GM10248 (cell line): ENCODE measurements at regions of chr3 and their contacts with region 1.

Region 1: DNA sequence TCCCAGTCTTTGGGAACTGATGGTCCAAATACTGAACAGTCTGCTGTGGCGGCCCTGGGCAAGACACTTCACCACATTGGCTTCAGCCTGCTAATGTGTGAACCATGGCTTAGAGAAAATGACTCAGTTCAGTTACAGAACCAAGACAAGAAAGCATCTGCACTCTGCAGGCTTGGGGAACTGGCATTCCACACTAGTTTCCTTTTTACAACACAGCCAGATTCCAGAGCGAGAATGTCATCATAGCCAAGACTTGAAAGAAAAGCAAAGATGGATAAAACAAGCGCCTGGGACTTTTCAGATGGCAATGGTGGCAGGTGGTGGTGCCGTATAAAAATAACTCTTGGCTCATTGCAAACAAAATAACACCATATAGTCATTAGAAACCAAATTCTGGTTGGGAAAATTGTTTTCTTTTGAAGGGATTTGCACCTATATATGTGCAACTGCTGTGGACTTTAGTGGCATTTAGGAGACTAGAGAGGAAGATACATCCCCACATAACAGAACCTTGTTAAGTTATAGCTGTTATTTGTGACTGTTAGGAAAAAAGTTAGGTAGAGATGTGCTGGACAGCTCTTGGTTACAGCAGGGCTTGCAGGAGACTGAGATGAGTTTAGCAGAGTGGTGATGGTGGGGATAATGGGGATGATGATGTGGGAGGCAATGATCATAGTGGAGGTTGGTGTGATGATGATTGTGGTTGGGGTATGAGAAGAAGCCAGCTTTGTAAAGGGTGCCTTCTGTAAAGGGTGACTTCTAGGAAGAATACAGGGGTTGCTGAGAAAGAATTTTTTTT is 273.6 kb downstream of the THRB start:
- DNase-seq: no peak
- CTCF ChIP-seq: no peak

Region 2: GRCh38 chr3:24185738-24186384 is 35.2 kb before region 1 on chr3:
- CTCF ChIA-PET with region 1: interaction called, 11 read pairs
- POLR2A ChIA-PET with region 1: no interaction called
- DNase-seq: peak; percentile 32
- CTCF ChIP-seq: peak; percentile 56

Region 3: DNA sequence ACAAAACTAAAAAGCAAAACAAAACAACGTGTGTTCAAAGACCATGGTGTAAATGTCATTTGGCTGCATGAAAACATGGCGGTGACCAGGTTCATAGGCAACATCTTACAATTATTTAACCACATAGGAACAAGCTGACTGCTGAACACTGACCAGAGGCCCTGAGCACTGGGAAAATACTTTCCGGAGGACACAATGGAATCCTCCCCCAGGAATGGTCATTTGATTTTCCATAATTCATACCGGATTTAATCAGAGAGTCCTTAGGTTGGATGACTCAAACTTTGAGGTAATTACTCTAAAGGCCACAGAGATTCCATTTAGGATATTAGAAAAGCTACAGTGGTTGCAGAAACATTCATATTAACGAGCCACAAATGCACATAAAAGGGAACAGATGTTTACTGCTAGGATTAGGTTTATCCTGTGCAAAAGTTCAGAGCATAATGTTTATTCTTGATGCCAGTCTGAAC is 21.2 kb before region 1 on chr3:
- CTCF ChIA-PET with region 1: no interaction called
- POLR2A ChIA-PET with region 1: no interaction called
- DNase-seq: no peak
- CTCF ChIP-seq: no peak

Region 4: DNA sequence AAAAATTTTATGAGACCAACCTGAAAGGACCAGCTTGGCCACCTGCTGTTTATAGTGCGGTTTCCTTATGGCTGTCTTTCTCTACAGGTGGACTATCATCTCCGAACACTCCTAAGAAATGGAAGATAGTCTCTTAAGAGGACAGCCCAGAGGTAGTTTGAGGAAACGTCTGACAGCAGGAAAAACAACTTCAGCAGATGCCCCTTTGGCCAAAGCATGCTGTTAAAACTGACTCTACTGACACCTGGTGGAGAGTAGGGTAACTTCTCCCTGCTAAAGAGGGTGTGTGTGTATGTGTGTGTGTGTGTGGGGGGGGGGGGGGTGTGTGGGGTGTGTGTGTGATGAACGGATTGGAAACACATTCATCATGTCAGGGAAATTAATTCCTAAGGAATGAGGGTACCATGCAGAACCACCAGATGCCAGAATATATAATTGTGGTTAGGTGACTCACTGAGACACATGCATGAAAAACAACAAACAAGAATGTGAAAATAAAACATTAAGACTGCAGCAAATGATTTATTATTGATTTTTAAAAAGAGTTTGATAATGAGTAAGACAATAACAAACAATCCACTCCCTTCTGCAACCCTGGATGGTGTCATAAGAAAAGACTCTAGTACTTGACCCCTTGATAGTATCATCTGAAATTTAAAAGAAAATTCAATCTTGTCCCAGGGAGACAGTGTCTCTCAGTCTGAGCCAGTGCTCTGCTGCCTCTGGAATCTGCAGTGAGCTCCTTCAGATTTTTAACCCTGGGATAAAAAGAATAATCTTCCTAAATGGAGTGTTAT is 17.1 kb after region 1 on chr3:
- CTCF ChIA-PET with region 1: interaction called, 16 read pairs
- POLR2A ChIA-PET with region 1: no interaction called
- DNase-seq: peak; percentile 43
- CTCF ChIP-seq: peak; percentile 72

Region 5: GRCh38 chr3:24538891-24539290 is 317.8 kb after region 1 on chr3:
- CTCF ChIA-PET with region 1: no interaction called
- POLR2A ChIA-PET with region 1: no interaction called
- DNase-seq: no peak
- CTCF ChIP-seq: no peak